ENCODE measurements at regions of chr16 and their contacts with region 1.

Region 1: DNA sequence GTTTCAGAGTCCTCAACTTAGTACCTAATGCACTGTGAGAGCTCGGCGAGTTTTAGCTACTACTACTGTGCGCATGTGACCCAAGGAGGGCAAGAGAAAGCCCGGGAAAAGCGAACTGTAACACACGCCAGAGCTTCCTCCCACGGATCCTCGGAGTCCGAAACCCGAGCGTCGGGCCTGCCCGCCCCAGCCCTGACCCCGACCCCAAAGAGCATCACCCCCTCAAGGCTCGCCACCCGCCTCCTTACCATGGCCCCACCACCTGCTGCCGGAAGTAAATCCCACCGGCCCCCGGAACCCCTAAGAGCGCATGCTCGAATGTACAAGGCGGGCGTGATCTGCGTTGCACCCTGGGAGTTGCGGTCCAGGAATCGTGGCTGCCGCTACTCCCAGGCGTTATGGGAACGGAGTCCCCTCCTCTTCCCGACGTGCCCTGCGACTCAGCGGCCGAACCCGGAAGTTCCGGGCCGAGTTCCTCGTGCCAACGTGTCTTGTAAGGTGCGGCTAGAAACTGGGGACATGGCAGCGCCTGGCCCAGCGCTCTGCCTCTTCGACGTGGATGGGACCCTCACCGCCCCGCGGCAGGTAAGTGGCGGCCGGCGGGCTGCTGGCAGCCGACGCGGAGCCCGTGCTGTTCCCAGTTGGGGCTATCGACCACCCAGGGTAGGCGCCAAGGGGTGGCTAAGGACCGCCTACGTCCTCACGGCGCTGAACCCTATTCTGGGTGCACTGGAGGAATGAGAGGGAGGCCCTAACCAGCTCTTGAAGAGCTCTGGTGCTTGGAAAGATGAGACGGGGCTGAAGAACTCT is at the starts of genes PMM2 and TMEM186:
- DNase-seq: peak; percentile 96 to 98 (median 97)
- ATAC-seq: peak; percentile 99 to 100 (median 100)
- H3K4me3 ChIP-seq: peak within 1 kb of the TSS; percentile 71 to 100 (median 88)
- H3K27ac ChIP-seq: peak within 1 kb of the TSS in 11 of 12 donors; percentile 65 to 90 (median 83)
- H3K4me1 ChIP-seq: peaks cover 0 to 40% (median 27%) of the 10 kb centered on the region in 12 donors
- H3K27me3 ChIP-seq: no peaks in the 10 kb centered on the region
- CTCF ChIP-seq: no peak
- POLR2A ChIP-seq: peak in 1 of 2 donors; percentile 71
- total RNA-seq, gene PMM2: 9.8 to 25.1 (median 13.4) TPM
- total RNA-seq, gene TMEM186: 9.6 to 14.6 (median 12.4) TPM

Region 2: DNA sequence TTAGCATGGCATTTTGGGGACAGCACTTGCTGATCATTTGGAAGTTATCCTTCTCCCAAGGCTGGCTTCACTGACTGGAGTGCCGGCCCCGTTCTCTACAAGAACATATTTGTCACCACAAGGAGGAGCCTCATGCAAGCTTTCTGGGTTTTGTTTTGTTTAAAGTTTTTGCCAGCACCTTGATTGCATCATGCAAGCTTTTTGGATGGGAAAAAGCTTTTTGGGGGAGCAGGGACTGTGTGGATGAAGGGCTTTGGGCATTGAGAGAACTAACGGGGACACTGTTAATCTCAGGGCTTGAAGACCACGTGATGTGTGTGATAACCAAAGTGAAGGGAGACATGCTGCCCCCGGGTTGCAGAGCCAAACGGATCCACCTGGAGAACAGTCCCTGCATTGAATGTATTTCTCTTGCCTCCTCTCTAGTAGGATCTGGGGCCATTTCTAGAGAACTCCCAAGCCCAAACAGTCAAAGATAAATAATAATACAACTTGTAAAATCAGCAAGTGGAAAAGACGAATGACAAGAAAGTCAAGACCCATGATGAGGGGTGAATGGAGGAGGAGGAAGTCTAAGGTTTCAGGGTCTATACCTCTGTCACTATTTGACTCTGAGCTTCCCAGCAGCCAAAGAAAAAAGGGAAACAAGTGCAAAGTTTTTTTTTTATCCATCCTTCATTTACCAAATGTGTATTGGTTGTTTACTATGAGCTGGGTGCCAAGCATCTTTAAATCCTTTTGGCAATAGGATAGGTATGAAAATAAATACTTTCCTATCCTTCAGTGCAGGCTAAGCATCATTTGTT is 224.4 kb before region 1 on chr16:
- intact Hi-C with region 1: loop called in 6 of 10 experiments (anchors 5 to 10 kb)
- DNase-seq: no peak
- ATAC-seq: no peak
- H3K4me3 ChIP-seq: no peak overlapping the region
- H3K27ac ChIP-seq: no peak overlapping the region
- H3K4me1 ChIP-seq: peaks cover 0 to 8% (median 0%) of the 10 kb centered on the region in 12 donors
- H3K27me3 ChIP-seq: peaks cover 0 to 20% (median 8%) of the 10 kb centered on the region in 9 donors
- CTCF ChIP-seq: peak in 10 of 12 donors; percentile 7 to 48 (median 34)
- POLR2A ChIP-seq: no peak

Region 3: GRCh38 chr16:8674413-8675022 is 123.1 kb before region 1 on chr16 and contains the start of gene ABAT:
- intact Hi-C with region 1: loop called in 3 of 10 experiments (anchors 5 kb)
- DNase-seq: peak; percentile 90 to 95 (median 91)
- ATAC-seq: peak; percentile 98 to 100 (median 100)
- H3K4me3 ChIP-seq: peak within 1 kb of the TSS; percentile 41 to 91 (median 70)
- H3K27ac ChIP-seq: peak within 1 kb of the TSS in 4 of 12 donors; percentile 29 to 52 (median 44)
- H3K4me1 ChIP-seq: peaks cover 0 to 17% (median 8%) of the 10 kb centered on the region in 12 donors
- H3K27me3 ChIP-seq: no peaks in the 10 kb centered on the region
- CTCF ChIP-seq: no peak
- POLR2A ChIP-seq: peak in 1 of 2 donors; percentile 51
- total RNA-seq, gene ABAT: 5.1 to 37.0 (median 12.8) TPM

Region 4: GRCh38 chr16:8760021-8760420 is 37.5 kb before region 1 on chr16:
- intact Hi-C with region 1: no loop called
- DNase-seq: no peak
- ATAC-seq: no peak
- H3K4me3 ChIP-seq: no peak overlapping the region
- H3K27ac ChIP-seq: no peak overlapping the region
- H3K4me1 ChIP-seq: no peaks in the 10 kb centered on the region
- H3K27me3 ChIP-seq: no peaks in the 10 kb centered on the region
- CTCF ChIP-seq: no peak
- POLR2A ChIP-seq: no peak

Region 5: DNA sequence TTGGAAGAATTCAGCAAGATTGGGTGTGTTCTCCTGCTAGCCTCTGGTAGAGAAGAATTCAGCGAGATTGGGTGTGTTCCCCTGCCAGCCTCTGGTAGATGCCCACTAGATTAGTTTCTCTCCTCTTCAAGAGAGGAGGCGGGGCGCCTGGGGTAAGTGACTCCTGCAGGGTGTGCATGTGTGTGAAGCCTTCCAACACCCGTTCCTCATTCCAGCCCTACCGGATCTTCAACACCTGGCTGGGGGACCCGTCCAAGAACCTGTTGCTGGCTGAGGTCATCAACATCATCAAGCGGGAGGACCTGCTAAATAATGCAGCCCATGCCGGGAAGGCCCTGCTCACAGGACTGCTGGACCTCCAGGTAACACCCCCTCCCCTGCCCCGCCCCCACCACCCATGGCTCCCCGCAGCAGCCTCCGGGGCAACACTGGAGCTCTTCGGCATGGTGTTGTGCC is 21.4 kb before region 1 on chr16:
- intact Hi-C with region 1: no loop called
- DNase-seq: no peak
- ATAC-seq: no peak
- H3K4me3 ChIP-seq: no peak overlapping the region
- H3K27ac ChIP-seq: no peak overlapping the region
- H3K4me1 ChIP-seq: no peaks in the 10 kb centered on the region
- H3K27me3 ChIP-seq: no peaks in the 10 kb centered on the region
- CTCF ChIP-seq: no peak
- POLR2A ChIP-seq: no peak

Region 6: DNA sequence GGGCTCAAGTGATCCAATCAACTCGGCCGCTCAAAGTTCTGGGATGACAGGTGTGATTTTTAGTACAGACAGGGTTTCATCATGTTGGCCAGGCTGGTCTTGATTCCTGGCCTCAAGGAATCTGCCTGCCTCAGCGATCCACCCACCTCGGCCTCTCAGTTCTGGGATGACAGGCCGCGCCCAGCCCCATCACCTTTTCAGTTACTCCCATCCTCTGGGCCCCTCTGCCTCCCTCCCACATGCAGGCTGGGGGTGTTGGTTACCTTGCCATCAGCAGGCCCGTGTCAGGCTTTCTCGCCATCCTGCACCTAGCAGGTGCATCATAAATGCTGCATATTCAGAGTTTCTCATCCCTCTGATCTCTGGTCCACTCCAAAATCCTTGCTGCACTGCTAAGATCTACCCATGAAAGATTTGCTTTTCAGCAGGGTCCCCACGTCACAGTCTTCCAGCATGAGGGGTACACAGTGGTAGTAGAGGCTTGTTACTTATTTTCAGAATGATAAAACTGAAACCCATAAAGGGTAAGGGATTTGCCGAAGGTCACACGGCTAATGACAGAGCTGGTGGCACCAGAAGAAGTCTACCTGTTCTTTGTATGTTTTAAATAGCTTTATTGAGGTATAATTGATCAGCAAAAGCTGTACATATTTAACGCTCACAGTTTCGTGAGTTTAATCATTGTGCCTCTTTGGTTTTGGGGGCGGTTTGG is 16.7 kb after region 1 on chr16:
- intact Hi-C with region 1: no loop called
- DNase-seq: no peak
- ATAC-seq: no peak
- H3K4me3 ChIP-seq: no peak overlapping the region
- H3K27ac ChIP-seq: no peak overlapping the region
- H3K4me1 ChIP-seq: peaks cover 0 to 3% (median 0%) of the 10 kb centered on the region in 12 donors
- H3K27me3 ChIP-seq: no peaks in the 10 kb centered on the region
- CTCF ChIP-seq: no peak
- POLR2A ChIP-seq: no peak

Region 7: GRCh38 chr16:8878521-8878911 is 80.9 kb after region 1 on chr16:
- intact Hi-C with region 1: loop called in 6 of 10 experiments (anchors 2 to 5 kb)
- DNase-seq: peak in 1 of 5 donors; percentile 35
- ATAC-seq: no peak
- H3K4me3 ChIP-seq: no peak overlapping the region
- H3K27ac ChIP-seq: no peak overlapping the region
- H3K4me1 ChIP-seq: peaks cover 0 to 4% (median 0%) of the 10 kb centered on the region in 12 donors
- H3K27me3 ChIP-seq: no peaks in the 10 kb centered on the region
- CTCF ChIP-seq: no peak
- POLR2A ChIP-seq: no peak

Measured in heart left ventricle (tissue), 16 donors.